ENCODE measurements at regions of chr17 and their contacts with region 1.

Region 1: DNA sequence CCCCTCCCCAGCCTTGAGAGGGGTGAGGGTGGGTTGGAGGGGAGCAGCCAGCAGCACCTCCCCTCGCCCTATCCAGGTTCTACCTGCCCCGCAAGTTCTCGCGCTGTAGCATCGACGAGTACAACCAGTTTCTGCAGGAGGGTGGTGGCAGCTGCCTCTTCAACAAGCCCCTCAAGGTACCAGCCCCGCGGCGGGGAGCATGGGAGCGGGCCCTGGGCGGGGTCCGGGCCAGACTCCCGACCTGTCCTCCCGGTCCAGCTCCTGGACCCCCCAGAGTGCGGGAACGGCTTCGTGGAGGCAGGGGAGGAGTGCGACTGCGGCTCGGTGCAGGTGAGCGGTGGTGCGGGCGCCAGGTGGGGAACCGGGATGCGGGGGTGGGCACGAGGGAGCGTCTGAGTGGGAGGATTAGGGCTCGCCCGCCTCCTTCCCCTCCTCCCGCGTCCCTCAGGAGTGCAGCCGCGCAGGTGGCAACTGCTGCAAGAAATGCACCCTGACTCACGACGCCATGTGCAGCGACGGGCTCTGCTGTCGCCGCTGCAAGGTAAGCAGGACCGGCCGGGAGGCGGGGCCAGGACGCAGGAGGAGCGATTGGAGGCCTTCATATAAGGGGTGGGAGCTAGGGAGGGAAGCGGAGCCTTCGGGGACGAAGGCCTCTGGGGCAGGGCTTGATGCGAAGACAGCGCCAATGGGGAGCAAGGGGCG is 16.5 kb downstream of the ADAM11 start:
- DNase-seq: peak; percentile 95
- H3K4me3 Mint-ChIP-seq: peak overlapping the region; percentile 89
- H3K27ac Mint-ChIP-seq: peak overlapping the region; percentile 52
- H3K4me1 Mint-ChIP-seq: no peaks in the 10 kb centered on the region
- H3K27me3 Mint-ChIP-seq: peaks cover 11% of the 10 kb centered on the region

Region 2: DNA sequence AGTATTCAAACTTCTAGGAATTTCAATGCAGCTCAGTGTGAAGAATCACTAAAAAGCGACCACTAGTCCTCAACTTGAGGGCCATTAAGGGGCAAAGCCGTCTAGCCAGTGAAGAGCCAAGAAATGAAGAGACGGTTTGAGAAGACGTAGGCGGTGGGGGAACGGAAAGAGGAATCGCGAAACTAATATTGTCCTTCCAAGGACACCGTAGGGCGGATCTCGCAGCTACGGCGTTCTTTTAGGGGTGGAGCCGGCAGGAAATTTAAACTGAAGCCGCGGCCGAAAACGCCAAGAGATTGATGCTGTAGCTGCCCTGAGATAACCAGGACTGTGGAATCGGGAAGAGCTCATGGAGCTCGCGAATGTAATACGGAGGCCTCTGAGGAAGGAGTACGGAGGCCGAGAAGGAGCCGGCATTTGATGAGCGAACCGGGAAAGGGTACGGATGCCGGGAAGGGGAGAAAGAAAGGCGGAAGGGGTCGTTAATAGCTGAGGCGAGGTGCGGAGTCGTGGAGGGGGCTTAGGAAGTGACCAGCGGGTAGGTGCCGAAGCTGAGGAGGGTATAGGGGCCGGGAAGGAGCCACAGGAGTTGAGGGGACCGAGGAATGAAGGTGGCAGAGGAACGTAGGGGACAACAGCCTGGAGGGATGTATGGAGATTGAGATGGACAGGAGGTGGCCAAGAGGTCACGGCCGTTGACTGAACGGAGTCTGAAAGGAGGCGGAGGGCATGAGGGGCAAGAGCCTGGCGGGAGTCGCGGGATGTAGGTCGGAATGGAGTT is 66.7 kb before region 1 on chr17 and contains the start of gene DBF4B:
- intact Hi-C with region 1: loop called (anchors 1 kb)
- DNase-seq: peak; percentile 81
- H3K4me3 Mint-ChIP-seq: no peak within 1 kb of the TSS
- H3K27ac Mint-ChIP-seq: no peak within 1 kb of the TSS
- H3K4me1 Mint-ChIP-seq: peaks cover 5% of the 10 kb centered on the region
- H3K27me3 Mint-ChIP-seq: peaks cover 7% of the 10 kb centered on the region
- total RNA-seq, gene DBF4B: 22.5 and 22.8 TPM in 2 replicates

Region 3: GRCh38 chr17:44794851-44795413 is 19.6 kb after region 1 on chr17:
- intact Hi-C with region 1: no loop called
- DNase-seq: no peak
- H3K4me3 Mint-ChIP-seq: no peak overlapping the region
- H3K27ac Mint-ChIP-seq: no peak overlapping the region
- H3K4me1 Mint-ChIP-seq: peaks cover 7% of the 10 kb centered on the region
- H3K27me3 Mint-ChIP-seq: peaks cover 3% of the 10 kb centered on the region

Region 4: GRCh38 chr17:44864866-44865660 is 89.8 kb after region 1 on chr17:
- intact Hi-C with region 1: loop called (anchors 1 kb)
- DNase-seq: peak; percentile 45
- H3K4me3 Mint-ChIP-seq: no peak overlapping the region
- H3K27ac Mint-ChIP-seq: no peak overlapping the region
- H3K4me1 Mint-ChIP-seq: no peaks in the 10 kb centered on the region
- H3K27me3 Mint-ChIP-seq: no peaks in the 10 kb centered on the region

Region 5: GRCh38 chr17:44947461-44948314 is 172.4 kb after region 1 on chr17 and contains the start of gene KIF18B:
- intact Hi-C with region 1: loop called (anchors 10 kb)
- DNase-seq: peak; percentile 90
- H3K4me3 Mint-ChIP-seq: peak within 1 kb of the TSS; percentile 95
- H3K27ac Mint-ChIP-seq: peak within 1 kb of the TSS; percentile 92
- H3K4me1 Mint-ChIP-seq: peaks cover 37% of the 10 kb centered on the region
- H3K27me3 Mint-ChIP-seq: peaks cover 2% of the 10 kb centered on the region
- total RNA-seq, gene KIF18B: 41.4 and 42.8 TPM in 2 replicates

Region 6: GRCh38 chr17:44961921-44962350 is 186.6 kb after region 1 on chr17:
- intact Hi-C with region 1: no loop called
- DNase-seq: no peak
- H3K4me3 Mint-ChIP-seq: no peak overlapping the region
- H3K27ac Mint-ChIP-seq: no peak overlapping the region
- H3K4me1 Mint-ChIP-seq: peaks cover 13% of the 10 kb centered on the region
- H3K27me3 Mint-ChIP-seq: peaks cover 69% of the 10 kb centered on the region

Region 7: DNA sequence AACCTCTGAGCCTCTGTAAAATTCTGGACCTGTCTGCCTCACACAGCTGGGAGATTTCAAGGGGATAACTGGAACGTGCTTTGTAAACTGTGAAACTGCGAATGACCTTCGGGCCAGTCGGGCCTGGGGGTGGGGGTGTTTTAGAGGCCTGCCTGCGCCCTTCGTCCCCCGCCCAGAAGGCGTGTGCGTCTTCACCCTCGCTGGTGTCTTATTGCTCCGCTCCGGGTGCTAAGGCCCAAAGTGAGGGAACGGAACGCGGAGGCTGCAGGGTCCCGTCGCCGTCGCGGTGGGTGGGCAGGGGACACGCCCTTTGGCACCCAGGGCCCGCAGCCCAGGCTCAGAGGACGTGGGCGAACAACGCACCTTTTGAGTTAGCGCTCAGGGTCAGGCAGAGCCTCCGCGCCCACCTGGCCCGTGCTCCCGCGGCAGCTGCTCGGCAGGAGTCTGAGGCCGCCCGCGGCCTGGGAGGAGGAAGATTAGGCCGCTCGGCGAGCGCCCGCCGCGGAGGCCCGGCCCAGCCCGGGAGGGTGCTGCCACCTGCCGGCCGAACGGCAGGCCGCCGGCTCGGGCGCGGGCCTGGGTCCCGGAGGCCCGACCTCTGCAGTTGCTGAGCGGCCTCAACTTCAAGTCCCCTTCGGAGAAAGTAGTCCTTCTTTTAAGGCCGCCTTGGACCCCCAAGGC is 246.5 kb after region 1 on chr17:
- intact Hi-C with region 1: loop called (anchors 2 kb)
- DNase-seq: peak; percentile 62
- H3K4me3 Mint-ChIP-seq: no peak overlapping the region
- H3K27ac Mint-ChIP-seq: no peak overlapping the region
- H3K4me1 Mint-ChIP-seq: peaks cover 22% of the 10 kb centered on the region
- H3K27me3 Mint-ChIP-seq: peaks cover 30% of the 10 kb centered on the region

Region 8: DNA sequence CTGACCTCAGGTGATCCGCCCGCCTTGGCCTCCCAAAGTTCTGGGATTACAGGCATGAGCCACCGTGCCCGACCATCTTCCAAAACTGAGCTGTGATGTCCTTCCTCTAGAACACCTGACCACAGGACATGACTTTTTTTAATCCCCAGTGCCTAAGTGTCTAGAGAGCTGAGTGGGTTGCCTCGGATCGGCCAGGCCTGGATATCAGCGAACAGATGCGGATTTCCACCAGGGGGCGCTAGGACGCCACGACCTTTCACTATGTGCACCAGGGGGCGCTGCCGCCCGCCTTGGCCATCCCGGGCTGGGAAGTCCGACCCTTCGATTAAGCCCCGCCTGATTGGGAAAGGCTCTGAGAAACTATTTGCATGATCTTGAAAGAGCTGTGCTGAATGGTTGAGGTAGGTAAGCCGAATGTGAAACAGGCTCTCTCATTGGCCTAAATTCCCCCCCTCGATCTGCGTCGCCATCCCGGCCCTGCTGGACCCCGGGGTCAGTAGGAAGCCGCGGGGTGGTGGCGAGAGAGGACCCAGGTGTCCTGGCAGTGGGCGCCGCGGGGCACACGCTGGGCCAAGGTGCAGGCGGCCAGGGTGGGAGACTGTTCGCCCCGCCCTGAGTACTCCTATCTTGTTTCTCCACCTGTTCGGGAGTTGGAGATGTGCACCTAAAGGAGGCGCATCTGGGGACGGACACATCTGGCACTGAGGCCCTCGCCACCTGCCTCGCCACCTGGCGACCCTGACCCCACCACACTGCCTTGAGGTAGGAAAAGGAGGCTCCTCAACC is 360.1 kb after region 1 on chr17 and contains the start of gene ACBD4:
- intact Hi-C with region 1: loop called (anchors 1 kb)
- DNase-seq: peak; percentile 96
- H3K4me3 Mint-ChIP-seq: peak within 1 kb of the TSS; percentile 87
- H3K27ac Mint-ChIP-seq: peak within 1 kb of the TSS; percentile 68
- H3K4me1 Mint-ChIP-seq: peaks cover 15% of the 10 kb centered on the region
- H3K27me3 Mint-ChIP-seq: peaks cover 6% of the 10 kb centered on the region
- total RNA-seq, gene ACBD4: 11.3 and 12.5 TPM in 2 replicates

Measured in activated T-helper 1 cell treated with anti-CD3 and anti-CD28 coated beads, Interleukin-12 subunit alpha, Interleukin-12 subunit beta, Interleukin-2, Interleukin-4 antibody, amounts not matched to agents 30 ng/mL and 10 ng/mL and 1 ng/mL, durations not matched to agents 14 hours and 24 hours and 36 hours (primary cell).